Left ventricle myocardium inferior (tissue), 1 donor: ENCODE measurements at regions of chr2 and their contacts with region 1.

Region 1: DNA sequence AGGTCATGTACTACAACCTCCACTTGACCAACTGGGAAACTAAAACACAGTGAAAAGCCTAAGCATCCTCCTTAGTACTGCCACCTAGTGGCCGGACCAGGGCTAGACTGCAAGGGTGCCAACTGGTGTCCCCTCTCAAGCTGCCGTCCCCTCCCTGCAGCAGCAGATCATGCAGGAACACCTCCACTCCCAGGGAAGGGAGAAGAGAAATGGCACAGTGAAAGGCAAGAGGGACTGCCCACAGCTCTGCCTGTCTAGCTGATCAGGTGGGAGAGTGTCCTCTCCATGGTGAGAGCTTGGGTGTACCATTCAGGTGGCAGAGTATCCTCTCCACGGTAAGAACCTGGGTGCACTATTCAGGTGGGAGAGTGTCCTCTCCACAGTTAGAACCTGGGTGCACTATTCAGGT is 78.1 kb downstream of the AAK1 start:
- DNase-seq: peak; percentile 51
- H3K4me3 ChIP-seq: no peak overlapping the region
- H3K27ac ChIP-seq: peak overlapping the region; percentile 70
- H3K4me1 ChIP-seq: peaks cover 96% of the 10 kb centered on the region
- H3K27me3 ChIP-seq: no peaks in the 10 kb centered on the region
- CTCF ChIP-seq: peak; percentile 79

Region 2: DNA sequence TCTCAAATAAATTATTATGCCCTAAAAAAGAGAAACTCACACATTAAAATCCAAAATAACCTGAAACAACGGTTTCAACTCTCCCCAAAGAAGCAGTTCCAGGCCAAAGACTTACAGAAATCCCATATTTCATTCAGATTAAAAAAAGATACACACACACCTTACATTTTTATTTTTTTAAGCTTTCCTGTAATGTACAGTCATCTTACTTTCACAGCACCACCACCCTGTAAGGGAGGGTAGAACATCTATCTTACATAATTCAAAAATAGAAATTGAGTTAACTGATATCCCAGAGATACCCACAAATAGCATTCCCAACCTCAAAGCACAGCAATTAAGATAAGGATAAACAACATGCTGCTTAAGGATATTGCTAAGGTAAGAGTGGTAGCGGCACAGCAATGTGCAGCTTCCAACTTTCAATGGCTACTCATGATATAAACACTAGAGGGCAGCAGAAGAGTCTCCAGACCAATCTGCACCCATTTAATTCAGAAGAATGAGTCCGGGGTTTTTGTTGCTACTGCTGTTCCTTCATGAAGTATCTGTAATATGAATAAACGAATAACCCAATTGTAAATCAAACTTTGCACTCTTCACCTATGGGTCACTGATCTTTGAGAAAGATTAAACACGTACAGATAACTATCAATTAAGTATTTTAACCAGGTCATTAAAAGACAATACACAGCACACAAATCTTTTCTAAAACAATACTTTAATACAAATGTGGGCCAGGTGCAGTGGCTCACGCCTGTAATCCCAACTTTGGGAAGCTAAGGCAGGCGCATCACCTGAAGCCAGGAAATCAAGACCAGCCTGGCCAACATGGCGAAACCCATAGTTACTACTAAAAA is 189.7 kb before region 1 on chr2:
- intact Hi-C with region 1: no loop called
- DNase-seq: no peak
- H3K4me3 ChIP-seq: no peak overlapping the region
- H3K27ac ChIP-seq: no peak overlapping the region
- H3K4me1 ChIP-seq: peaks cover 7% of the 10 kb centered on the region
- H3K27me3 ChIP-seq: no peaks in the 10 kb centered on the region
- CTCF ChIP-seq: peak; percentile 80

Region 3: GRCh38 chr2:69483696-69484095 is 81.7 kb before region 1 on chr2:
- intact Hi-C with region 1: no loop called
- DNase-seq: no peak
- H3K4me3 ChIP-seq: no peak overlapping the region
- H3K27ac ChIP-seq: no peak overlapping the region
- H3K4me1 ChIP-seq: peaks cover 5% of the 10 kb centered on the region
- H3K27me3 ChIP-seq: no peaks in the 10 kb centered on the region
- CTCF ChIP-seq: no peak

Region 4: GRCh38 chr2:69715964-69716363 is 150.5 kb after region 1 on chr2:
- intact Hi-C with region 1: loop called (anchors 2 kb)
- DNase-seq: no peak
- H3K4me3 ChIP-seq: no peak overlapping the region
- H3K27ac ChIP-seq: no peak overlapping the region
- H3K4me1 ChIP-seq: peaks cover 5% of the 10 kb centered on the region
- H3K27me3 ChIP-seq: no peaks in the 10 kb centered on the region
- CTCF ChIP-seq: no peak